WTC11 (cell line): ENCODE measurements at regions of chr22 and their contacts with region 1.

Region 1: DNA sequence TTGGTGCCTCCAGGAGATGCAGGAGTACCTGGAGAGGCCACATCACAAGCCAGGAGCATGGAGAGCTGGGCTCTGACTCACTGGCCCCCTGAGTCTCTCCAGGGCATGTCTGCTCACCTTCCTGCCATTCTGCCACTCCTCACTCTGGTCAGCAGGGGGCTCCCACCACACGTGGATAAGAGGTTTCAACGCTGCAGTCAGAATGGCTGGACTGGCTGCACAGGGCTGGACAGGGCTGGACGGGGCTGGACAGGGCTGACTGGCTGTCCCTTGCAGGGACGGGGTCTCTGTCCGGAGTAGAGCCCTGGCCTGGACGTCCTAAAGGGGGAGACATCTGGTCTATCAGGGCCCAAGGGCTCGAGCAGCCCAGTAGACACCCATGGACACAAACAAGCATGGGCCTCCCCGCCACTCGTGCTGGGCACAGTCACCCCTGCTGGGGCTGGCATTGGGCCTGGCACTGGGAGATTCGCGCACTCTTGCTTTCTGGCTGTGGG is 34.6 kb downstream of the CYTH4 start:
- DNase-seq: peak; percentile 80
- ATAC-seq: peak; percentile 86
- H3K4me3 Mint-ChIP-seq: no peak overlapping the region
- H3K27ac Mint-ChIP-seq: no peak overlapping the region
- H3K4me1 Mint-ChIP-seq: peaks cover 11% of the 10 kb centered on the region
- H3K27me3 Mint-ChIP-seq: no peaks in the 10 kb centered on the region; the same call in 1 of the 2 replicates
- CTCF ChIP-seq: peak; percentile 88

Region 2: GRCh38 chr22:37305887-37306286 is 11.0 kb before region 1 on chr22:
- CTCF ChIA-PET with region 1: no interaction called
- POLR2A ChIA-PET with region 1: no interaction called
- DNase-seq: no peak
- ATAC-seq: no peak
- H3K4me3 Mint-ChIP-seq: no peak overlapping the region
- H3K27ac Mint-ChIP-seq: no peak overlapping the region
- H3K4me1 Mint-ChIP-seq: peaks cover 41% of the 10 kb centered on the region
- H3K27me3 Mint-ChIP-seq: peaks cover 10% of the 10 kb centered on the region
- CTCF ChIP-seq: no peak

Region 3: DNA sequence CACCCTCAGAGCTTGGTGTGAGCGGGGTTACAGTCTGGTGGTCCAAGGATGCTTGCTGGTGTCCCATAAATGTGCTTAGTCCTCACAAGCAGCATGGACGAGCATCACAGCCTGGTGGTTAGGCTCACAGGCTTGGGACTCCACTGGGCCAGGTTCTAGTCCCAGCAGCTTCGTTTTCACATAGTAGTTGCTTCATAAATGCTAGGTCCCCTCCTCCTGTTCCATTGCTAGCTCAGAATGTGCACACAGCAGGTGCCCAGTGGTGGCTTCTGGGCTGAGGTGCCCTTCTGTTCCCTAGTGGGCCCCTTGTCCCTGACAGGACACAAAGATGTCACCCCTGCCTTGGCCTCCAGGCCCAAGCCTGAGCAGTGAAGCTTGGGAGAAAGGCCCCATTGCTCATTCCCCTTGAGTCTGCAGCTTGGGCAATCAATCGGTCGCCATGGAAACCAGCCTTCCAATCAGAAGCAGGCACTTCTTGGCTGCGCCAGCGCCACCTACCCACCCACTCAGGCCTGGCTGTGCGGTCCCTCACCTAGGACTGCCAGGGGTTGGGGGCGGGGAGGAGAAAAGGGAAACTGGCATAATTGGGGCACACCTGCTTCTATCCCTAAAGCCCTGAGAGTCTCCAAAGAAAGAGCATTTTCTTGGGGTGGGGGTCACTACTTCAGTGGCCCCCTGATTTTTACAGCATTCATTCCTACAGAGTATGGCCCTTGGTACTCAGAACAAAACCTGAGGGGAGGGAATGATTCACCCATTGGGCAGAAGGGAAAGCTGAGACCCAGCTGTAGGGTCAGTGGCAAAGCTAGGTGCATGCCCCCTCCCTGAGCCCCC is 13.5 kb after region 1 on chr22:
- CTCF ChIA-PET with region 1: interaction called, 20 read pairs
- POLR2A ChIA-PET with region 1: no interaction called
- DNase-seq: peak; percentile 91
- ATAC-seq: peak; percentile 84
- H3K4me3 Mint-ChIP-seq: no peak overlapping the region
- H3K27ac Mint-ChIP-seq: no peak overlapping the region
- H3K4me1 Mint-ChIP-seq: peaks cover 29% of the 10 kb centered on the region
- H3K27me3 Mint-ChIP-seq: peaks cover 43% of the 10 kb centered on the region
- CTCF ChIP-seq: no peak

Region 4: GRCh38 chr22:37401401-37402183 is 84.7 kb after region 1 on chr22:
- CTCF ChIA-PET with region 1: interaction called, 12 read pairs
- POLR2A ChIA-PET with region 1: no interaction called
- DNase-seq: no peak
- ATAC-seq: no peak
- H3K4me3 Mint-ChIP-seq: no peak overlapping the region
- H3K27ac Mint-ChIP-seq: no peak overlapping the region
- H3K4me1 Mint-ChIP-seq: peaks cover 22% of the 10 kb centered on the region
- H3K27me3 Mint-ChIP-seq: no peaks in the 10 kb centered on the region
- CTCF ChIP-seq: no peak

Region 5: GRCh38 chr22:37419969-37420685 is 103.2 kb after region 1 on chr22:
- CTCF ChIA-PET with region 1: interaction called, 13 read pairs
- POLR2A ChIA-PET with region 1: no interaction called
- DNase-seq: peak; percentile 64
- ATAC-seq: peak; percentile 79
- H3K4me3 Mint-ChIP-seq: peak overlapping the region; percentile 87
- H3K27ac Mint-ChIP-seq: no peak overlapping the region; the same call in 1 of the 2 replicates
- H3K4me1 Mint-ChIP-seq: peaks cover 32% of the 10 kb centered on the region
- H3K27me3 Mint-ChIP-seq: peaks cover 48% of the 10 kb centered on the region
- CTCF ChIP-seq: no peak

Region 6: DNA sequence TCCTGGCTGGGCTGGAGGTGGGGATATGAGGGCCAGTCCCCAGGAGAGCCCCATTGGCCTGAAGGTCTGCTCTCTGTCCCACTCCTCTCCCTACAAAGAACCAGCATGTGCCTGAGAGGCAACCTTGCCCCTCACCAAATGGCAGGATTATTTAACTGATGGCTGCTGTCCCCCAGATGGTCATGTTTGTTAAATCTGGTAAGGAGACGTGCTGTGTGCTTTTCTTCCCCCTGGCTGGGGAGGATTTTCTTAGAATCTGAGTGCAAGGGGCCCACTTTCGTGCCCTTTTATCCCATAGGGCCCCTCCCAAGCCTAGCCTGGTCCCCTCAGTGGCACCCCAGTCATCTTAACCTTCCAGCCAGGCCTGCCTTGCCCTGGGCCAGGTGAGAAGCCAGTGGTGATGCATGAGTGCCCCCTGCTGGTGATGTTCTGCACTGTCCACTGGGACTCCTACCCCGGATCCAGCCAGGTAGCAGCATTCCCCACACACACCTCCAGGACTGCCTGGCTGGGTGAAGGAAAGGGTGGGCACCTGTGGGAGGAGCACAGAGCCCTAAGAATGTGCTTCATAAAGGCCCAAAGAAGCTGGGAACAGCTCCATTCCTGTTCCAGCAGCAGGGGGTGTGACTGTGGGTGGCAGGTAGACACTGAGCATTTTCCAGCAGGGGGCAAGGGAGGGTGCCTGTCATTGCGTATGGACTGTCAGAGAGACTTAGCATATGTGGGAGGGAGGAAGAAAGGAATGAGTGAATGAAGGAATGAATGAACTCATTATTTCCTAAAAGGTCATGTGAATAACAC is 140.4 kb after region 1 on chr22:
- CTCF ChIA-PET with region 1: interaction called, 18 read pairs
- POLR2A ChIA-PET with region 1: no interaction called
- DNase-seq: peak; percentile 94
- ATAC-seq: peak; percentile 98
- H3K4me3 Mint-ChIP-seq: no peak overlapping the region
- H3K27ac Mint-ChIP-seq: no peak overlapping the region
- H3K4me1 Mint-ChIP-seq: peaks cover 2% of the 10 kb centered on the region; the same call in 1 of the 2 replicates
- H3K27me3 Mint-ChIP-seq: no peaks in the 10 kb centered on the region
- CTCF ChIP-seq: peak; percentile 96